HepG2 (cell line): ENCODE measurements at regions of chr4 and their contacts with region 1.

Region 1: DNA sequence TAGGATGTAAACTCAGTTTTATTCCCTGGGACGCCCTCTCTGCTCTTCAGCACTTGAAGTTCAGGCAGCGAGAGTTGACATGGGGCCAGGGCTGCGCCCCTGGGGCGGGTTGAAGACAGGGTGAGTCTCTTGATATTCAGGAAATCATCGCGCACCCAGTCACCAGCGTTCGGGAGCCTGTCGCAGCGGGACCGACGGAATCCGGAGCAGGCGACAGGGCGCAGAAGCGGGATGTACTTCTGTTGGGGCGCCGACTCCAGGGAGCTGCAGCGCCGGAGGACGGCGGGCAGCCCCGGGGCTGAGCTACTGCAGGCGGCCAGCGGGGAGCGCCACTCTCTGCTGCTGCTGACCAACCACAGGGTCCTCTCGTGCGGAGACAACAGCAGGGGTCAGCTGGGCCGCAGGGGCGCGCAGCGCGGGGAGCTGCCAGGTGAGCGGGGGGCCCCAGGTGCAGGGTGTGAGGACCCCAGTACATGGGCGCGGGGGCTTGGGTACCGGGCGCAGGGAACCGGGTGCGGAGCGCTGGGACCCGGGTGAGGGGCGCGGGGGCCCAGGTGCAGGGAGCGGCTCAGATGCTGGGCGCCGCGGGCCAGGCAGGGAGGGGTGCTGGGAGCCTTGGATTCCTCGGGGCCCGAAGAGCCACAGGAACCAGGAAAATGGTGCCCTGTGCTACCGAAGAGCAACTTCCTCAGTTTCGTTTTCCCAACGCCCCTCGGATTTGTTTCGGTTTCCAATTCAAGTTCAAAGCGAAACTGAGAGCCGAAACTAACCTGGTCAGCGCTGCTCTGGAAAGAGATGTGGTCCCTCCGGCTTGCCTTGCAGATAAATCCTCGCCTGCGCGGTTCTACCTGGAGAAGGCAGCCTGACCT is at the start of gene HERC6:
- DNase-seq: peak; percentile 83
- ATAC-seq: peak; percentile 98
- H3K4me3 ChIP-seq: peak within 1 kb of the TSS; percentile 81 to 91 (median 86)
- H3K27ac ChIP-seq: peak within 1 kb of the TSS; percentile 40
- H3K4me1 ChIP-seq: peaks cover 5% of the 10 kb centered on the region; the same call in 1 of the 2 replicates
- H3K27me3 ChIP-seq: peaks cover 2 to 7% of the 10 kb centered on the region in 2 experiments; a peak in 3 of 5 replicates
- CTCF ChIP-seq: peak; percentile 86
- EP300 ChIP-seq: no peak
- POLR2A ChIP-seq: no peak
- RAD21 ChIP-seq: peak; percentile 80
- total RNA-seq, gene HERC6: 2.0 and 2.7 TPM in 2 replicates

Region 2: DNA sequence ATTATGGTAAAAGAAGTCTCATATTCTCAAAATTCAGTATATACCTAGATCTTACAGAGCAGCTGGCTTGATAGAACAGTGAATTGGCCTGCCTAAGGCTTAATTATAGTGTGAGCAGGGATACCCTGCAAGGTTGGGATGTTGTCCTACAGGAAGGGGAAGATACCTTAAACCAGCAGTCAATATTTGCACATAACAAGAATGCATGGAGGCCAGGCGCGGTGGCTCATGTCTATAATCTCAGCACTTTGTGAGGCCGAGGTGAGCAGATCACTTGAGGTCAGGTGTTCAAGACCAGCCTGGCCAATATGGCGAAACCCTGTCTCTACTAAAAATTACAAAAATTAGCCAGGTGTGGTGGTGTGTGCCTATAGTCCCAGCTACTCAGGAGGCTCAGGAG is 161.8 kb before region 1 on chr4:
- CTCF ChIA-PET with region 1: no interaction called
- POLR2A ChIA-PET with region 1: no interaction called
- in situ Hi-C with region 1: no loop called
- intact Hi-C with region 1: loop called (anchors 2 kb)
- DNase-seq: peak; percentile 23
- ATAC-seq: no peak; the same call in 2 of the 3 replicates
- H3K4me3 ChIP-seq: no peak overlapping the region
- H3K27ac ChIP-seq: no peak overlapping the region
- H3K4me1 ChIP-seq: peaks cover 39% of the 10 kb centered on the region
- H3K27me3 ChIP-seq: no peaks in the 10 kb centered on the region; a peak in 2 of 5 replicates
- CTCF ChIP-seq: no peak
- EP300 ChIP-seq: no peak
- POLR2A ChIP-seq: no peak
- RAD21 ChIP-seq: no peak

Region 3: DNA sequence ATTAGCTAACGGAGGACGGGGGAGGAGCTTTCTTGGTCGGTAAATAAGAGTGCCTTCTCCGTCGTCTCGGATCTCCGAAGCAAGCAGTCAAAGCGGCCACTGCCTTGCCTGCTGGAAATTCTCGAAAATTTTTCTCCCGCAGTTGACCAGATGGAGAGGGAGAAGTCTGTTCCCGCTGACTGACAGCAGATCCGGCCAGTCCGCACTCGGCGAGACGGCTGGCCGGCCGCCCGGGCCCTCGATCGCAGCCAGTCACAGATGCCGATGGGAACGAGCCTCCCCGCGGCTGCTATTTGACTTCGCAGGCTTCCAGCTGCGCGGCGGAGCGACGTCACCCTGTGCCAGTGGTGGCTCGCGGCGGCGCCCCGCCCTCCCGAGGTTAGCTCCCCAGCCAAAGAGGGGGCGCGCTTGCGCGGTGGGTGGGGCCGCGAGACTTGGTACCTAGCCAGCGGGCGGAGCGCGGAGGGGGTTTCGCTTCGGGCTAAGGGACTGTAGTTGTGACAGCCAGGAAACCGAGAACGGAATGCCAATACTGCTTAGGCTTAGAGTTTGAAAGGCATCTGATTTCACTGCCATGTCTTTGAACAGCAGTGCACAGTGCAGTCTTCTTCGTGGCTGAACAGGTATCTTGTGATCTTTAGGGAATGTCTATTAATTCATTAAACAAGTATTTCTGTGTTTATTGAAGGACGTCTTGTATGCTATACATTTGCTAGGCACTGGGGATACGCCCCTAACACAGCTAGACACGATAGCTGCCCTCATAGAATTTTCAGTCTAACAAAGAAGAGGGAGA is 94.3 kb before region 1 on chr4 and contains the start of gene PPM1K:
- CTCF ChIA-PET with region 1: no interaction called
- POLR2A ChIA-PET with region 1: interaction called, 6 read pairs
- in situ Hi-C with region 1: no loop called
- intact Hi-C with region 1: loop called (anchors 1 kb)
- DNase-seq: peak; percentile 95
- ATAC-seq: peak; percentile 95
- H3K4me3 ChIP-seq: peak within 1 kb of the TSS; percentile 74 to 81 (median 76)
- H3K27ac ChIP-seq: peak within 1 kb of the TSS; percentile 82
- H3K4me1 ChIP-seq: peaks cover 32% of the 10 kb centered on the region
- H3K27me3 ChIP-seq: no peaks in the 10 kb centered on the region
- CTCF ChIP-seq: peak; percentile 65
- EP300 ChIP-seq: peak in 1 of 2 experiments; percentile 22; a peak in 1 of 4 replicates
- POLR2A ChIP-seq: peak in 1 of 2 experiments; percentile 46; a peak in 2 of 4 replicates
- RAD21 ChIP-seq: no peak
- total RNA-seq, gene PPM1K: 17.8 and 23.3 TPM in 2 replicates

Region 4: GRCh38 chr4:88334967-88335665 is 43.8 kb before region 1 on chr4:
- CTCF ChIA-PET with region 1: no interaction called
- POLR2A ChIA-PET with region 1: no interaction called
- in situ Hi-C with region 1: no loop called
- intact Hi-C with region 1: no loop called
- DNase-seq: peak; percentile 67
- ATAC-seq: peak; percentile 94
- H3K4me3 ChIP-seq: no peak overlapping the region
- H3K27ac ChIP-seq: no peak overlapping the region
- H3K4me1 ChIP-seq: peaks cover 12% of the 10 kb centered on the region
- H3K27me3 ChIP-seq: peaks cover 0 to 1% of the 10 kb centered on the region in 2 experiments; a peak in 2 of 5 replicates
- CTCF ChIP-seq: no peak
- EP300 ChIP-seq: no peak
- POLR2A ChIP-seq: no peak
- RAD21 ChIP-seq: no peak

Region 5: GRCh38 chr4:88456757-88457306 is 77.9 kb after region 1 on chr4 and contains the start of gene HERC5:
- CTCF ChIA-PET with region 1: no interaction called
- POLR2A ChIA-PET with region 1: no interaction called
- in situ Hi-C with region 1: no loop called
- intact Hi-C with region 1: loop called (anchors 2 kb)
- DNase-seq: peak; percentile 74
- ATAC-seq: peak; percentile 96
- H3K4me3 ChIP-seq: peak within 1 kb of the TSS in 2 of 3 experiments; percentile 33 to 52; a peak in 3 of 6 replicates
- H3K27ac ChIP-seq: no peak within 1 kb of the TSS
- H3K4me1 ChIP-seq: peaks cover 7% of the 10 kb centered on the region; the same call in 1 of the 2 replicates
- H3K27me3 ChIP-seq: peaks cover 0 to 24% of the 10 kb centered on the region in 2 experiments; a peak in 3 of 5 replicates
- CTCF ChIP-seq: peak; percentile 88
- EP300 ChIP-seq: no peak
- POLR2A ChIP-seq: no peak
- RAD21 ChIP-seq: peak; percentile 64; the same call in 1 of the 2 replicates
- total RNA-seq, gene HERC5: 0.29 and 0.33 TPM in 2 replicates

Region 6: DNA sequence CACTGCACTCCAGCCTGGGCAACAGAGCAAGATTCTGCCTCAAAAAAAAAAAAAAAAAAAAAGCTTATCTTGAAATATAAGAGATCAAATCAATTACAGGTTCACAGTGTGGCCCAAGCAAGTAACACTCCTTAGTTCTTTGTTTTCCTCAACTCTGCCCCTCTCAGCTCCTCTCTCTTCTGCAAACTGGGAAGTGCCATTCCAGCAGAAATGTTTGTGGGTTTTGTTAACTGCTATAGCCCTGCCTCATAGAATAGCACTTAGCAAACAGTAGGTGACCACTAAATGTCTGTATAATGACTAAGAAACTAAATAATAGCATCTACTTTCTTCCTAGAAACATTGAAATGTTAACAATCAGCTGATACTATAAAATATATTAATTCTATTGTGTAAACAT is 478.7 kb after region 1 on chr4:
- CTCF ChIA-PET with region 1: no interaction called
- POLR2A ChIA-PET with region 1: no interaction called
- in situ Hi-C with region 1: no loop called
- intact Hi-C with region 1: no loop called
- DNase-seq: no peak
- ATAC-seq: no peak
- H3K4me3 ChIP-seq: no peak overlapping the region
- H3K27ac ChIP-seq: no peak overlapping the region
- H3K4me1 ChIP-seq: no peaks in the 10 kb centered on the region
- H3K27me3 ChIP-seq: no peaks in the 10 kb centered on the region
- CTCF ChIP-seq: no peak
- EP300 ChIP-seq: no peak
- POLR2A ChIP-seq: no peak
- RAD21 ChIP-seq: no peak